Activated CD4-positive, alpha-beta memory T cell treated with anti-CD3 and anti-CD28 coated beads, Interleukin-2, amount 10 ng/mL, durations not matched to agents 7 days and 5 days (primary cell): ENCODE measurements at regions of chr2 and their contacts with region 1.

Region 1: DNA sequence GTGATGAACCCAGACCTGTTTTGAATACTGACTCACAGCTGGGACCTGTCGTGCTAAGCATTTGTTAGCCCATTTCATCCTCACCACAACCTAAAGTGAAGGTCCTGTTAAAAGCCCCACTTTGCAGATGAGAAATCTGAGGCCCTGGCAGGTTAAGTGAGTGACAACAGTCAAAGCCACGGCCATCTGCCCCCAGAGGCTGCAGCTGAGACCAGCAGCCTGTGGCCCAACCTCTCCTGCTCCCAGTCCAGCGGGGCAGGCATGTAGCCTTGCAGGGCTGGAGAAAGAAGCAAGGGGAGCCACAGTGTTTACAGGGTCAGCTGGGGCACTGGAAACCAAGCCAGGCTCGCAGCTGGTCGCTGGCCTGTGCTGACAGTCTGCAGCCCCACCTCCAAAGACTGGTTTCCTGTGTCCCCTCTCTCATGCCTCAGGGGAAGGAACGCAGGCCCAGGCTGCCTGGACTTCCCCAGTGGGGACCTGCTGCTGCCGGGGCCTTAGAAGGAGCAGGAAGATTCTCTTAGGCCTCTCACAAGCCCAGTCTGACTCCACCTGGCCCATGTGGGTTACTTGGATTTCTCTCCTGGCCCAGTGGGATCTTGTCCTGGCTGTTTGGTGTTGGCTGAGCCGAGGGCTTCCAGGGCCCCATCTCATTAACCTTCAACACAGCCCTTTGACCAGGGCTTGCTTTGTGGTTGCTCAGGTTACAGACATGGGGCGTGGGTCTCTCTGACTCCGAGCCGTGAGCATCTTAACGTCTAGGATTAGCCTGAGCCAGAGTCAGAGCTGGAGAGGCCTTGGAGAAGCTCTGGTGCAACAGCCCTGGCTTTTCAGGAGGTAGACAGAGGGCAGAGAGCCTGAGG is 1.7 kb downstream of the INPP5D start:
- DNase-seq: peak; percentile 57
- H3K4me3 Mint-ChIP-seq: peak overlapping the region; percentile 99
- H3K27ac Mint-ChIP-seq: peak overlapping the region; percentile 84
- H3K4me1 Mint-ChIP-seq: peaks cover 60% of the 10 kb centered on the region
- H3K27me3 Mint-ChIP-seq: no peaks in the 10 kb centered on the region

Region 2: GRCh38 chr2:233075966-233076339 is 14.1 kb after region 1 on chr2:
- CTCF ChIA-PET with region 1: interaction called, 35 read pairs
- POLR2A ChIA-PET with region 1: interaction called, 335 read pairs
- DNase-seq: peak; percentile 52
- H3K4me3 Mint-ChIP-seq: no peak overlapping the region
- H3K27ac Mint-ChIP-seq: no peak overlapping the region
- H3K4me1 Mint-ChIP-seq: peaks cover 48% of the 10 kb centered on the region
- H3K27me3 Mint-ChIP-seq: no peaks in the 10 kb centered on the region

Region 3: DNA sequence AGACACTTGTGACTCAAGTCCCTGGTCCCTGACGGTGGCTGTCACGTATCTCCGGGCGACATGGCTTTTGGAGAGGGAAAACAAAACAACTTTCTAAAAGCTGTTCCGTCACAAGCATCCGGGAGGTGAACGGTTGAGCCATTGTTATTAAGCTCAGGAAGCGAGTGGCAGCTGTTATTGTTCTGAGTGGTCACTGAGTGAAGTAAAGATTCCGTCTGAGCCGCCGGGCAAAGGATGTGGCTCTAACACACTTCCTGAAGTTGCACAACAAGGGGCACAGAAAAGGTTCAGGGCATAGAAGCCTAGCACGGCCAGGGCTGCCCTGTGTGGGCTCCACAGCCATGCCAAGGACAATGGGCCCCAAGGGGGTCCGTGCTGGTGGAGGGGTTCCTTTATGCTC is 22.7 kb after region 1 on chr2:
- CTCF ChIA-PET with region 1: interaction called, 33 read pairs
- POLR2A ChIA-PET with region 1: interaction called, 335 read pairs
- DNase-seq: peak; percentile 81
- H3K4me3 Mint-ChIP-seq: peak overlapping the region; percentile 73
- H3K27ac Mint-ChIP-seq: peak overlapping the region; percentile 97
- H3K4me1 Mint-ChIP-seq: peaks cover 87% of the 10 kb centered on the region
- H3K27me3 Mint-ChIP-seq: no peaks in the 10 kb centered on the region

Region 4: DNA sequence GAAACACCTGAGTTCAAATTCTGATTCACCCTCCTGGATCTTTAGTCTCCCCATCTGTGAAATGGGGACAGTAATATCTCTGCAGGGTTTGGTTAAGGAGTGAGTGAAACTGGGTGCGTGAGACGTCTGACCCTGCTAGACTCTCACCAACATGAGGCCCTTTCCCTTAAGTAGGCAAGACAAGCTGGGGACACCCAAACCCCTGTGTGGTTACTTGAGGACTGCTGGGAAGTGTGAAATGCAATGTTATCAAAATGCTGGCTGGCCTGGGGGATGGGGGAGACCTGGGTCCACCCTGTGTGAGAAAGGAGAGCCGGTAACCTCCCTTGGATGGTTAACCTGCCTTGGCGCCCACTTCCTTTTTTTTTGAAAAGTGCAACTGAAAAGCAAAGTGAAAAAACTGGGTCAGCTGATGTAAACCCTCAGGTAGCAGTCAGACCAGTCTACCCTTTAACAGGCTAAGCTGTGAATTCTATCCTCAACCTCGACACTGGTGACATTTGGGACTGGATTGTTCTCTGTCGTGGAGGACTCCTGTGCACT is 80.6 kb after region 1 on chr2:
- CTCF ChIA-PET with region 1: no interaction called
- POLR2A ChIA-PET with region 1: interaction called, 13 read pairs
- DNase-seq: peak; percentile 73
- H3K4me3 Mint-ChIP-seq: peak overlapping the region; percentile 46
- H3K27ac Mint-ChIP-seq: peak overlapping the region; percentile 92
- H3K4me1 Mint-ChIP-seq: peaks cover 53% of the 10 kb centered on the region
- H3K27me3 Mint-ChIP-seq: no peaks in the 10 kb centered on the region

Region 5: GRCh38 chr2:233234264-233234663 is 172.4 kb after region 1 on chr2:
- CTCF ChIA-PET with region 1: interaction called, 18 read pairs
- POLR2A ChIA-PET with region 1: interaction called, 7 read pairs
- DNase-seq: peak; percentile 52
- H3K4me3 Mint-ChIP-seq: peak overlapping the region; percentile 22
- H3K27ac Mint-ChIP-seq: peak overlapping the region; percentile 91
- H3K4me1 Mint-ChIP-seq: peaks cover 84% of the 10 kb centered on the region
- H3K27me3 Mint-ChIP-seq: no peaks in the 10 kb centered on the region

Region 6: DNA sequence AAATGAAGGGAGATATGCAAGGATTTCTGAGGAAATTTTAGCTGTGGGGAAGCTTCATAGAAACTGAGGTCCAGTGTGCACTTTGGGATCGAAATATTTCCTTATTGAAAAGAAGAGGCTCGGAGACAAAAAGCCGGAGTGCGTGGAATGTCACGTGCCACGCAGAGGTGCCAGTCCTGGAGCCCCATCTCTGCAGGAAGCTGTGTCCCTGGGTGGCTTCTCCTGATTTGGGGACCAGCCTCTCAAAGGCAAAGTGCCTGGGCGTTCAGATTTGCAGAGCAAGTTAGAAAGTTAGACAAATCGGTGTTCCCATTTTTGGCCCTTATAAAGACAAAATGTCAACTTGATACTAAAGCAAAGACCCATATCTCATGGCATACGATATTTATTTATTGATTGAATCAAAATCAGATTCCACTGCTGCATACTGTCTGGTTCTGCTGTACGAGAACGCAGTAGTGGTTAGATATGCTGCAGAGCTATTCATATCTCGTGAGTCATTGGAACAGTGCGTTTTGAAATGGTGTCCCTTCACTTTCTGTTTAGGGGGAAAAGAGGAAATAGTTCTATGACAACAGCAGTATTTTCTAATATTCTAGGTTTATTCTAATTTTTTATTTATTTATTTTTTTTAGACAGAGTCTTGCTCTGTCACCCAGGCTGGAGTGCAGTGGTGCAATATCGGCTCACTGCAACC is 180.6 kb after region 1 on chr2:
- CTCF ChIA-PET with region 1: interaction called, 4 read pairs
- POLR2A ChIA-PET with region 1: interaction called, 13 read pairs
- DNase-seq: no peak
- H3K4me3 Mint-ChIP-seq: no peak overlapping the region
- H3K27ac Mint-ChIP-seq: peak overlapping the region; percentile 82
- H3K4me1 Mint-ChIP-seq: peaks cover 66% of the 10 kb centered on the region
- H3K27me3 Mint-ChIP-seq: no peaks in the 10 kb centered on the region

Region 7: DNA sequence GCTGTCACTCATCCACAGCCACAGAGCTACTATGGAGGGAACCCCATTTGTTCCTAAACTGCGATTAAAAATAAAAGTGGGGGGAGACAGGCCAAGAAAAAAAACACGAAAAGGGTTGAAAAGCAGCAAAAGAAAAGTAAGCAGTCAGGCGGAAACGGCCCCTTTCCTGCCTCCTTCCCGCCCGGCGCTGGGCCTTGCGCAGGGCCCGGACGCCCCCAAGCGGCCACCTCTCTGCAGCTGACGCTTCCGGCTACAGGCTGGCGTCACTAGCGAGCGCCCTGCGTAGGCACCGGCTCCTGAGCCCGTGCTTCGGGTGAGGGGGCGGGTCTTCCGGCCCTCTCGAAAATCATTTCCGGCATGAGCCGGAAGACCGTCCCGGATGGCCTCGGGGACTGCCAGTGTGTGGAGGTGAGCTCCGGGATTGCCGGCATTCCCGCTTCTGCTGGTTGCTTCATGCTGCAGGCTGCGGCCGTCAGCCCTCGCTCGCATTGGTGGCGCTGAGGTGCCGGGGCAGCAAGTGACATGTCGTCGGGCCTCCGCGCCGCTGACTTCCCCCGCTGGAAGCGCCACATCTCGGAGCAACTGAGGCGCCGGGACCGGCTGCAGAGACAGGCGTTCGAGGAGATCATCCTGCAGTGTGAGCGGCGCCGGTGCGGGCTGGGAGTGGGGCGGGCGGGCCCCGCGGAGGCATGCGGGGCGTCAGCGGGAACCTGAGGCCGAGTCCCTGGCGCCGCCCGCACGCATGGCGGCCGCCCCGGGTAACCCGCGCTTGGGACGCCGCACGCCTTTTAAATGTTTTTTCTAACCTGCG is 189.7 kb after region 1 on chr2 and contains the start of gene ATG16L1:
- CTCF ChIA-PET with region 1: interaction called, 25 read pairs
- POLR2A ChIA-PET with region 1: interaction called, 26 read pairs
- DNase-seq: peak; percentile 97
- H3K4me3 Mint-ChIP-seq: peak within 1 kb of the TSS; percentile 87
- H3K27ac Mint-ChIP-seq: peak within 1 kb of the TSS; percentile 95
- H3K4me1 Mint-ChIP-seq: peaks cover 73% of the 10 kb centered on the region
- H3K27me3 Mint-ChIP-seq: no peaks in the 10 kb centered on the region
- total RNA-seq, gene ATG16L1: 55.9 to 58.9 TPM